ENCODE measurements at regions of chr1 and their contacts with region 1.

Region 1: GRCh38 chr1:227734856-227735538 is at the starts of genes JMJD4 and SNAP47:
- DNase-seq: peak; percentile 89 to 94
- H3K4me3 ChIP-seq: peak within 1 kb of the TSS; percentile 80 to 83
- H3K27ac ChIP-seq: peak within 1 kb of the TSS; percentile 87 to 88
- H3K4me1 ChIP-seq: peaks cover 0 to 42% (median 34%) of the 10 kb centered on the region in 4 donors
- H3K27me3 ChIP-seq: no peaks in the 10 kb centered on the region
- CTCF ChIP-seq: no peak

Region 2: DNA sequence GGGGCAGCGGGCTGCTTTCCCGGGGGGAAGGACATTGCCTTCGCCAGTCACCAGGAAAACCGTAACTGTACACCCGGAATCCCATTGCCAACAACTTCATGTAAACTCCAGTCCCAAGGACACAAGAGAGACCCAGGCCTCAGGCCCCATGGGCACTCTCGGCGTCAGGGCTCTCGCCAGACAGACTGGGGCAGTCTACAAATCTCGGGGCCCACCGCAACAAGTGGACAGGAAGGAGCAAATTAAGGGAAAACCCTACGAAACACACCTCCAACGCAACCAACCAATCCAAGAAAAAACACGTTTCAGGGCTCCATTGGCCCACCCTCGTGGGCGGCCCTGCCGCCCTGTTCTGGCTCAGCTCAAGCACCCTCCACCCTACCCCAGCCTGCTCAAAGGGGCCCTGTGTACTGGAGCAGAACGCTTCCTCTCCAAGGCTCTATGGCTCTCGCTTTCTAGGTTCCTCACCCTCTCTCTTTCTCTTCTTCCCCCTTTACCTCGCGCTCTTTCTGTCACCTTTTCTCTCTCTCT is 176.2 kb before region 1 on chr1:
- intact Hi-C with region 1: loop called (anchors 5 kb)
- DNase-seq: no peak
- H3K4me3 ChIP-seq: no peak overlapping the region
- H3K27ac ChIP-seq: no peak overlapping the region
- H3K4me1 ChIP-seq: peaks cover 0 to 12% (median 6%) of the 10 kb centered on the region in 4 donors
- H3K27me3 ChIP-seq: peaks cover 0 to 31% of the 10 kb centered on the region in 2 donors
- CTCF ChIP-seq: no peak

Measured in tibial artery (tissue), 4 donors.